ENCODE measurements at regions of chr14 and their contacts with region 1.

Region 1: DNA sequence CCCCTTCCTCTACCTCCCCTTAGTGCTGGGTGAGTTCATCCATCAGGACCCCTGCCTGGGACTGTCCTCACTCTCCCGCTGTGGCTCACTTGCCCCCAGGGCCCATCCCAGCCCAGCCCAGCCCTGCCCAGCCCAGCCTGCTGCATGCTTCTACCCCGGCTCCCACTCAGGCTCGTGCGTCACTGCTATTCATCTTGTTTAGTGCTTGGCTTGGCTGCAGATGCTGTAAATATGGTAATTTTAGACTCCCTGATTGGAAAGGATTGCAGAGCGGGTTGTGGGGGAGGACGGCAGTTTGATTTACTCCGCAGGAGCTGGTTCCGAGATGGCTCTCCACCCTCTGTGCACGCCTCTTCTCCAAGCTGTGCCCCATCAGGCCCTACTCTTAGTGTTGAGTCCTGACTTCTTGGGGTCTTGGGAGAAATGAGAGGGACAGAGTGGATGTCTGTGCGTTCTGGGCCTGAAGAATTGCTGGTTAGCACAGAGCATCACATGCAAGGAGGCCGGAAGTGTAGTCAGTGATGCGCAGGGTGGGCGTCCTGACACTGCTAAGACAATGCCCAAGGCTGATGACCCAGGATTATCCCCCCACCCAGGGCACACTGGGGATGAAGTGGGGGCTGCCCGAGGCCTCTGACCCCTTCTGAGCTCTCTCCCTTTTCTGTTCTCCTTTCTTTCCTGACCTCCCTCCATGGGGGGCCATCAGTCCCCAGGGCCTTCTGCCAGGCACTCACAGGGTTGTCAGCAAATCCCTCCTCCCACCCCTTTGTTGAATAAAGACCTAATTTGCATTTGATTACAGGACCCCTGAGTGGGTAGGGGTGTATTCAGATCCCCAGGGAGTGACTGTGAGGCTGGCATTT is 244.4 kb downstream of the ZFP36L1 start:
- DNase-seq: peak; percentile 91
- ATAC-seq: peak; percentile 89

Region 2: DNA sequence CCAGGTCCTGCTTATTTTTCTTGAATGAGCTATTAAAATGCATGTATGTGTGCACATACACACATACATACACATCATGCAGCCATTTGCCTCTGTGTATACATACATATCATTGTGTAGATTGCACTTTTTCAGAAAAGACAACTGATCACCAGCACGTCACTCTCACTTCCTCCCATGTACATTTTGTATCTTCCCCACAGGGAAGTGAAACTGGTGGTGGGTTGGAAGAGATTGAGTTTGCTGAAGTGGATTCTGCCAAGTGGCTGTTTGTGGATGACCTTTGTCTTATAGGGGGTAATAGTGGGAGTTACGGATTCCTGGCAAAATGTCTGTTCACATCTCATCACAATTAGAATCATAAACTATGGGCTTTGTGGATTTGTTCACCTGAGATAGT is 280.2 kb before region 1 on chr14:
- intact Hi-C with region 1: no loop called
- DNase-seq: no peak
- ATAC-seq: peak; percentile 40

Region 3: DNA sequence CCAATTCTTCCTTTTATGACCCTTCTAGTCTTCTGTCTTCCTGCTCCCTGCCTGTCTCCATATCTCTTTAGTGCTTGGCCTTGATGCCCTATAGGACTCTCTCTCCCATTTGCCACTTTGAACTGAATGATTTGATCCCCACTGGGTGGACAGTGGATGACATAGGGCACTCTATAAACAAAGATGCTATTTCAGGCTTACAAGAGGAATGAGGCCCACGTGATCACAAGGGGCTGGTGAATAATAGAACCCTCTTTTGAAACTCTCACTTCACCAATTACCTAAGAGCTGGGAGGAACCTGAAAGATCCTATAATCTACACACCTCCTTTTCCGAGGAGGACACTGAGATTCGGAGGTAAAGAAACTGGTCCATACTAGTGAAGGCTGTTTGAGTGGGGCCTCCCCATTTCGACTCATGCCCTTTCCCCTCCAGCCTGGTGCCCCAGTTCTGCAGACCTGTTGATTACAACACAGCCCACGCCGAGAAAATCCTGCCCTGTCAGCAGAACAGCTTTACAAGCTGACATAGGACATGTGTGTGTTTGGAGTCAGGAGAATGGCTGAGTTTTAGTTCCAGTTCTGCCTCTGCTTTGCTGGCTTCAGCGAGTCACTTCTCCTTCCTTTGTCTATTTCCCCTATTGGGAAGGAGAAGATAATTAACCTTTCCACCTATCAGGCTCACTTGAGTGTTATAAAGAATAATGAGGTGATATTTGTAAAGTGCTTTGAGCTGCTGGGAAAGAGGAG is 155.9 kb before region 1 on chr14:
- intact Hi-C with region 1: loop called (anchors 5 kb)
- DNase-seq: peak; percentile 81
- ATAC-seq: peak; percentile 57

Region 4: GRCh38 chr14:68627880-68628607 is 79.6 kb after region 1 on chr14:
- intact Hi-C with region 1: loop called (anchors 5 kb)
- DNase-seq: peak; percentile 84
- ATAC-seq: peak; percentile 51

Region 5: DNA sequence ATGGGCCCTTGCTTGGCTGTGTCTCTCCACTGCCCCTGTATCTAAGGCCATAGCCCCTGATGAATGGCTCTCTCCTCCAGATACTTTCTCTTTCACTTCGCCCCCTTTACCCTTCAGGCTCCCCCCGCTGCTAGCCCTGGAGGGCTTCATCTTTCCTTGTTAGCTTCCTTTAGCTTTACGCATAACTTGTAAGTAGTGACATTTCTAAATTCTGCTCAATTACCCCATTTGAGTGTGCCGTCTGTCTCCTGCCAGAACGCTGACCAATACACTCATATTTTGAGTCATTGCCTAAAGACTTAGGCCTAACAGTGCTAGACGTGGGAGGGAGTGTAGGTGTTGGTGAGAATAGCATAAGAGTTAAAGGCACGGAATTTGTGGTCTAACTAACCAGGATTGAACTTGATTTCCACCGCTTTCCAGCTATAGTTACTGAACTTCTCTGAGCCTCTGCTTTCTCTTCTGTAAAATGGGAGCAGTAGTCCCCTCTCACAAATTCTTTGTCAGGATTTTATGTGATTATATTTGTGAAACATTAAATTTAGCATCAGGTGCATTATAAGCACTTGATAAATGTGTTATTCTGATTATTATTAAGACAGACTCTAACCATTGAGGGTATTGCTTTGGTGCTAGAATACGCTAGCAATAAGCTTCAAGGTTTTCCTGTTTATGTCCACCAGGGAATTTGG is 115.1 kb after region 1 on chr14:
- intact Hi-C with region 1: loop called (anchors 5 kb)
- DNase-seq: no peak
- ATAC-seq: no peak

Region 6: GRCh38 chr14:68807148-68807600 is 258.7 kb after region 1 on chr14:
- intact Hi-C with region 1: no loop called
- DNase-seq: peak; percentile 76
- ATAC-seq: peak; percentile 69